ENCODE measurements at regions of chr2 and their contacts with region 1.

Region 1: DNA sequence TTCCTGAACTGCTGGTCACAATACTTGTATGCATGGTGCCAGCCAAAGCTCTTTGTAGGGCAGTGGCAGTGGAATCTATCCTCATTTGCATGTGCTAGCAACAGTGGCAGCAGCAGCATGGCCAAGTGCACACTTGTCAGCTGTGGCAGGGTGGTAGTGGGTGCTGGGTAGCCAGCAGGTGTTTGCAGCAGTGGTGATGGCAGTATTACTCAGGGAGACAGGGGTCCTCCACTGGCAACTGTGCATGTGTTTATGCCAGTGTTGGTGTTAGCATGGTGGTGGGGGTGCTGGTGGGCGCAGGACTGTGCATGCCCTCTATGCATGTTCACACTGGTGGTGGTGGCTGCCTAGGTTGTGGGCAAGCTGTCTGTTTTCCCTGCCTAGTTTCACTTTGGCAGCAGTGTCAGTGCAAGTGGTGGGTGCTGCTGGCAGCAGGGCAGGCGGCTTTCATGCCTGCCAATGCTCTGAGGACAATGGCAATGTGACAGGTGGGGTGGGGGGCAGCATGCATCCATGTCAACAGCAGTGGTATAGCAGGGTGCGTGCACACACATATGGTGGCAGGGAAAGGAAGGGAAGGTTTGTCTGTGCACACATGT is 41.2 kb downstream of the GALNT13 start:
- DNase-seq: no peak
- ATAC-seq: peak; percentile 26

Region 2: DNA sequence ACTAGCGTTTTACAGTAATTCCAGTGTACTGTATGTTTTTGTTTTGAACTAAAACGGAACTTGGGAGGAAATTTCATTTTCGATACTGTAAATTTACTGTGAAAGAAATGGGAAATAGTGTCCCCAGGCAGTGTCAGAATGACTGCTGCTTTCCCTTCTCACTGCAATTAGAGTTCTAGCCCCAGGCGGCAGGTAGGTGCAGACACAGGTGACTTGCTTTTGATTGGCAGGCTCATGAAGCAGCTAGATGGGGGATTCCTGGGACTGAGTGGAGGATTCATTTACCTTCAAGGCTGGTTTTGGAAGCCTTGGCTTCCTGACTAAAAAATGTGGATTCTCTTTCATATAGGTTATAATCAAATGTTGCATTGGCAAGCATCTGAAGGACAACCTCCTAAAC is 461.3 kb before region 1 on chr2:
- intact Hi-C with region 1: no loop called
- DNase-seq: no peak
- ATAC-seq: no peak

Region 3: GRCh38 chr2:155792666-155793065 is 1879.8 kb after region 1 on chr2:
- intact Hi-C with region 1: loop called (anchors 10 kb)
- DNase-seq: no peak
- ATAC-seq: no peak